SK-N-SH (cell line): ENCODE measurements at regions of chr6 and their contacts with region 1.

Region 1: DNA sequence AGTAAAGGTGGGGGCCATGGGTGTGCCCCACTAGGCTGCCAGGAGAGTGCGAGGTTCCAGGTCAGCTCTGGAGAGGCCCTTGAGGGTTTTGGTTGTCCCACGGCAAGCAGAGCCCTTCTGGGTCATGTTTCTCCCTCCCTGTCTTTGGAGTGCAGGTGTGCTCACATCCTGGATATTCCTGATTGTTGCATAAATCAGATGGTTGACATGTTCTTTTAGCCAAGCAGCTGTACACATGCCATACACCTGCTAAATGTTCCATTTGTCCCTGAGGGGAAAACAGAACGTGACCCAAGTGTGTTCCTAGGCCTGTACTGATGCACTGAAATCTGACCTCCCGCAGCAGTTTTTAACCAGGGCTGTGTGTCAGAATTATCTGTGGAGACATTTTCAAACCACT is 77.5 kb upstream of the BEND3 start:
- DNase-seq: no peak
- H3K4me3 ChIP-seq: no peak overlapping the region
- H3K27ac ChIP-seq: no peak overlapping the region
- H3K4me1 ChIP-seq: no peaks in the 10 kb centered on the region; a peak in 1 of 4 replicates
- H3K27me3 ChIP-seq: no peaks in the 10 kb centered on the region
- CTCF ChIP-seq: no peak
- EP300 ChIP-seq: no peak
- RAD21 ChIP-seq: no peak

Region 2: GRCh38 chr6:107355659-107356058 is 162.8 kb after region 1 on chr6:
- CTCF ChIA-PET with region 1: no interaction called
- POLR2A ChIA-PET with region 1: interaction called, 13 read pairs
- DNase-seq: no peak
- H3K4me3 ChIP-seq: no peak overlapping the region
- H3K27ac ChIP-seq: no peak overlapping the region
- H3K4me1 ChIP-seq: peaks cover 0 to 2% of the 10 kb centered on the region in 2 experiments; a peak in 1 of 4 replicates
- H3K27me3 ChIP-seq: no peaks in the 10 kb centered on the region
- CTCF ChIP-seq: no peak
- EP300 ChIP-seq: no peak
- RAD21 ChIP-seq: no peak

Region 3: GRCh38 chr6:107423474-107423990 is 230.7 kb after region 1 on chr6:
- CTCF ChIA-PET with region 1: no interaction called
- POLR2A ChIA-PET with region 1: no interaction called
- DNase-seq: no peak
- H3K4me3 ChIP-seq: no peak overlapping the region
- H3K27ac ChIP-seq: no peak overlapping the region
- H3K4me1 ChIP-seq: no peaks in the 10 kb centered on the region; a peak in 1 of 4 replicates
- H3K27me3 ChIP-seq: no peaks in the 10 kb centered on the region
- CTCF ChIP-seq: no peak
- EP300 ChIP-seq: no peak
- RAD21 ChIP-seq: no peak